ENCODE measurements at regions of chr7 and their contacts with region 1.

Region 1: DNA sequence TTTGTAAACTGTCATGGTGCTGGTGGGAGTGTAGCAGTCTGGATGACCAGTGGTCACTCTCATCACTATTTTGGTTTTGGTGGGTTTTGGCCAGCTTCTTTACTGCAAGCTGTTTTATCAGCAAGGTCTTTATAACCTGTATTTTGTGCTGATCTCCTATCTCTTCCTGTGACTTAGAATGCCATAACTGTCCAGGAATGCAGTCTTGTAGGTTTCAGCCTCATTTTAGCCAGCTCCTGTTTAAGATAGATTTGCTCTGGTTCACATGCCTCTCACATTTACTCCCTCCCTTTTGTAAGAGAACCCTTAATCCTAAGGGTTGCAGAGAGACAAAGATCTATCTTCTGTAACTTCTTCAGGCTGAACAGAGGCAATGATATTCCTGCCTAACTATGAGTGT is 51.1 kb upstream of the INHBA start:
- H3K4me3 Mint-ChIP-seq: no peak overlapping the region
- H3K27ac Mint-ChIP-seq: no peak overlapping the region
- H3K4me1 Mint-ChIP-seq: peaks cover 16% of the 10 kb centered on the region
- H3K27me3 Mint-ChIP-seq: no peaks in the 10 kb centered on the region

Region 2: DNA sequence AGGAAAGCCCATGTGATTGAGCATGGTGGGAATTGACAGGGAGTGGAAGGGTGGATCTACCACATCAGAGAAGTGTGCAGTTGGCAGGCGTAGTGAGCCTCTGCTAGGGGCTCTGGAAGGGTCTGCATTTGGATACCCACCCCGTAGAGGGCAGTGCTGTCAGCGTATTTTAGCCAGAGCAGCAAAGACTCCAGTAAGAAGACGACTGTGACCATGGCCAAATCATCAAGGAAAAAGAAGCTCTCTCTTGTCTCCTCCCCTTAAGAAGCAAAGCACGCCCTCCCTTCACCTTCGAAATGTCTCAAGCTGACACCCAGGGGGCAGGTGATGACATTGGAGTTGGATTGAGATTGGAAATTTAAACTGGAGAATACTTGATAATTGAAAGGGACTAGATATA is 17.7 kb after region 1 on chr7:
- intact Hi-C with region 1: loop called (anchors 1 kb)
- H3K4me3 Mint-ChIP-seq: no peak overlapping the region
- H3K27ac Mint-ChIP-seq: no peak overlapping the region
- H3K4me1 Mint-ChIP-seq: peaks cover 19% of the 10 kb centered on the region
- H3K27me3 Mint-ChIP-seq: no peaks in the 10 kb centered on the region

Region 3: GRCh38 chr7:41803569-41803968 is 49.5 kb after region 1 on chr7:
- intact Hi-C with region 1: no loop called
- H3K4me3 Mint-ChIP-seq: no peak overlapping the region
- H3K27ac Mint-ChIP-seq: no peak overlapping the region
- H3K4me1 Mint-ChIP-seq: peaks cover 11% of the 10 kb centered on the region
- H3K27me3 Mint-ChIP-seq: peaks cover 5% of the 10 kb centered on the region